ENCODE measurements at regions of chr7 and their contacts with region 1.

Region 1: DNA sequence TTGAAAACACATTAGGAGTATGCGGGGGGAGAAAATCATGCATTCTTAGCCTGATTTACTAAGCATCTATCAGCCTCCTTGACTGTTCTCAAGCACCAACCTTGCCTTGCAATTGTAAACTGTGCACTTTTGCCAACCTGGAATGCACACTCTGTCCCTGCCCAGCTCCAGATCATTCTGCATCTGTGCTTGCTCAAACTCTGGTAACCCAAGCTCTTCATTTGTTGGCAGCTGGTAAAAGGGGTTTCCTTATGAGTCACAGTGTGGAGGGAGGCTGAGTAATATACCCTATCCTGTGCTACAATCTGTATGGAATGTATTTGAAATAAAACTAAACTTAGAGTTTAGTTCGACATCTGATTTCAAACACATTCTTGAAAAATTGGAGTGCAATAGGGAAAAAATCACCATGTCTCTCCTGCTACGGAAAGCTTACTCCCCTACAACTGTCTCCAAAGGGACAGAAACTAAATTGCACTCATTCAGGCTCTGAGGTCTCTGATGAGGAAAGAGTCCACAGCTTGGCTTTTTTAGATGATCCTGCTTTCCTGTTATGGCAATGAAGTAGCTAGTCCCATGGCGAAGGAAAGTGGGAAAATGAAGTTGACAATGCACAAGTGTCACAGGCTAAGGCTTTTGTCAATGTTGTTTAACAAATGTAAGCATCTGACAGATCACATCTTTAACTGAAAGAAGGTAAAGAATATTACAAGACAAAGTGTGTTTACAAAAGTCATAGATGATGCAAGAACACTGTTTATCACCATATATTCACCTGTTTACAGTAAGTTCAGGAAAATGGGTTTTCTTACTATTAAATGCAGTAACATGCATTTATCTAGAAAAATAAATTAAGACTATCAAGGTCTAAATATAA is 61.9 kb downstream of the TES start:
- DNase-seq: peak; percentile 96
- ATAC-seq: peak; percentile 90
- H3K4me3 ChIP-seq: peak overlapping the region; percentile 59
- H3K27ac ChIP-seq: peak overlapping the region; percentile 96
- H3K4me1 ChIP-seq: peaks cover 50% of the 10 kb centered on the region
- H3K27me3 ChIP-seq: no peaks in the 10 kb centered on the region
- CTCF ChIP-seq: no peak

Region 2: GRCh38 chr7:116316833-116317612 is 44.8 kb after region 1 on chr7:
- CTCF ChIA-PET with region 1: no interaction called
- POLR2A ChIA-PET with region 1: no interaction called
- intact Hi-C with region 1: loop called (anchors 1 kb)
- DNase-seq: peak; percentile 98
- ATAC-seq: peak; percentile 93
- H3K4me3 ChIP-seq: peak overlapping the region; percentile 29
- H3K27ac ChIP-seq: peak overlapping the region; percentile 87
- H3K4me1 ChIP-seq: peaks cover 25% of the 10 kb centered on the region
- H3K27me3 ChIP-seq: no peaks in the 10 kb centered on the region
- CTCF ChIP-seq: no peak

Region 3: GRCh38 chr7:116354546-116355408 is 82.6 kb after region 1 on chr7:
- CTCF ChIA-PET with region 1: no interaction called
- POLR2A ChIA-PET with region 1: no interaction called
- intact Hi-C with region 1: loop called (anchors 1 kb)
- DNase-seq: peak; percentile 96
- ATAC-seq: peak; percentile 85
- H3K4me3 ChIP-seq: peak overlapping the region; percentile 51; the same call in 1 of the 2 replicates
- H3K27ac ChIP-seq: peak overlapping the region; percentile 91
- H3K4me1 ChIP-seq: peaks cover 51% of the 10 kb centered on the region
- H3K27me3 ChIP-seq: no peaks in the 10 kb centered on the region
- CTCF ChIP-seq: no peak

Region 4: DNA sequence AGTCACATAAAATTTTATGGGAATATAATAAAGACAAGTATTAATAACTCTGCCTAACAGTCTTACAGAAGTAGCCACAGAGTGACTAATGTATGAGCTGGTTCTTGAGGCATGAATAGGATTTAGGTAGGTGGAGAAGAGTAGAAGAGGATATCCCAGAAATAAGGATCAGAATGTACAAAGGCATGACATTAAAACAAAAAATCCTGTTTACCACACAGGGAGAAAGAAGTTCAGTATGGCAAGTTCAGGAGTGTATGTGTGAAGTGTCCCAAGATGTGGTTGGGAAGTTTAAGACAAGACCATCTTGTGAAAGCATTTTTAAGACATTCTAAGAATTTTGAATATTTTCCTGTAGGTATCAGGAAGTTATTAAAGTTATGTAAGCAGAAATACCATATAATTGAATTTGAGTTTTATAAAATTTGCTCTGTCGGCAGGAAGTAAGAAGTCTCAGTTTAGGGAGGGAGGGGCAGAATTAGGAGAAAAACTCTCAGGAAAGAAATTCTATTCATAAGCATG is 162.7 kb after region 1 on chr7:
- CTCF ChIA-PET with region 1: no interaction called
- POLR2A ChIA-PET with region 1: no interaction called
- intact Hi-C with region 1: loop called (anchors 2 kb)
- DNase-seq: peak; percentile 85
- ATAC-seq: peak; percentile 97
- H3K4me3 ChIP-seq: peak overlapping the region; percentile 34; the same call in 1 of the 2 replicates
- H3K27ac ChIP-seq: peak overlapping the region; percentile 85
- H3K4me1 ChIP-seq: peaks cover 34% of the 10 kb centered on the region
- H3K27me3 ChIP-seq: no peaks in the 10 kb centered on the region
- CTCF ChIP-seq: no peak